WTC11 (cell line): ENCODE measurements at regions of chr3 and their contacts with region 1.

Region 1: DNA sequence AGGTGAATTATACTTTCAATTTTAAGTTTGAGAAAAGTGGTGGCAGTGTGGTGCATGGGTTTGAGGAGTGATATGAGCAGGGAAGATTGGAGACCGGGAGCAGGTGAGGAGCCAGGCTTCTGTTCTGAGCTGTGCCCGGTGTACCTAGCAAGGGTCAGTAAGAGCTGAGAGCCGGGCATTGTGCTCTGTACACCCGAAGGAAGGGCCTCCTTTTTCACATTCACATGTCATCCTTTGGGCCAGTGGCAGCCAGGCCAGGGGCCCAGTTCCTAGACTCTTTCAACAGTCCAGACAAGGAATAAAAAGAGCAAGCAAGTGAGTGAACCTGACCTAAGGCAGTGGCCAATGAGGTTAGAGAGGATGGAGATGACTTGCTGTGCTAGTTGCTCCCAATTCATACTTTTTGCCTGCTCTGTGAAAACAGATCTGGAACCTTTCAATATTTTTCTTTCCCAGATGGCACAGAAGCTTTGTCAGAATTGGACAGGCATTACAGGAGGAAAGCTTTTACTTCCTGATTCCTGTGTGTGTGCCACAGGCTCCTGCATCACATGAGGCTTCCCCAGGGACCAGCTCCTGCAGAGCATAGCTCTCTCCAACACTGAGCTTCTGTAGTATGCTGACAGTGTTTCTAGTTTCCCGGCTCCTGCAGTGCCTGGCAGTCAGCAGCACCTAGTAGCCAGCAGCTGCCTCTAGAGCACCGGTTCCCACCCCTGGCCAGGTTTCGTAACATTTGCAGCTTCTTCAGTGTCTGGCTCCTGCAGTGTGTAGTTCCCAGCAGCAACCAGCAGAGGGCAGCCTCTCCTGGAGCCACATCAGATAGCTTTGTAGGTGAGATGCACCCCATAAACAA is 5.3 kb upstream of the TRA2B start:
- DNase-seq: peak; percentile 90
- ATAC-seq: peak; percentile 99
- H3K4me3 Mint-ChIP-seq: no peak overlapping the region
- H3K27ac Mint-ChIP-seq: peak overlapping the region; percentile 16; the same call in 1 of the 2 replicates
- H3K4me1 Mint-ChIP-seq: peaks cover 7% of the 10 kb centered on the region
- H3K27me3 Mint-ChIP-seq: peaks cover 11% of the 10 kb centered on the region
- CTCF ChIP-seq: peak; percentile 98

Region 2: GRCh38 chr3:185585859-185586685 is 357.1 kb before region 1 on chr3 and contains the start of gene SENP2:
- CTCF ChIA-PET with region 1: interaction called, 10 read pairs
- POLR2A ChIA-PET with region 1: interaction called, 4 read pairs
- DNase-seq: peak; percentile 99
- ATAC-seq: peak; percentile 87
- H3K4me3 Mint-ChIP-seq: peak within 1 kb of the TSS; percentile 89
- H3K27ac Mint-ChIP-seq: peak within 1 kb of the TSS; percentile 99
- H3K4me1 Mint-ChIP-seq: peaks cover 37% of the 10 kb centered on the region
- H3K27me3 Mint-ChIP-seq: no peaks in the 10 kb centered on the region; the same call in 1 of the 2 replicates
- CTCF ChIP-seq: no peak
- total RNA-seq, gene SENP2: 55.0 to 57.2 TPM (median 56.9 TPM) in 3 replicates

Region 3: DNA sequence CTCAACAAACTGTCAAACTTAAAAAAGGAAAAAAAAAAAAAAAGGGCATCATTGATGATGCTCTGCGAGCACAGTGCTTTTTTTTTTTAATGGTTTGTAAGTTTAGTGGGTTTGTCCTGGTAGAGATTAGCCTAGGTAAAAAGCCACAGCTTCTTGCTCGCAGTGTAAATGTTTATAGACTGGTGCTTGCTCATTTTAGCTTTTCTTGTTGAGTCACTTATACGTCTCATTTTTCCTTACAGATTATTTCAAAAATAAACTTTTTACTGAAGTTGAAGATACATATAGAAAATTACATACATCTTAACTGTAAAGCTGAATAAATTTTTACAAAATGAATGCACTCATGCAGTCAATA is 11.2 kb after region 1 on chr3:
- CTCF ChIA-PET with region 1: interaction called, 113 read pairs
- POLR2A ChIA-PET with region 1: interaction called, 9 read pairs
- DNase-seq: no peak
- ATAC-seq: no peak
- H3K4me3 Mint-ChIP-seq: no peak overlapping the region
- H3K27ac Mint-ChIP-seq: no peak overlapping the region
- H3K4me1 Mint-ChIP-seq: peaks cover 13% of the 10 kb centered on the region
- H3K27me3 Mint-ChIP-seq: no peaks in the 10 kb centered on the region
- CTCF ChIP-seq: no peak

Region 4: DNA sequence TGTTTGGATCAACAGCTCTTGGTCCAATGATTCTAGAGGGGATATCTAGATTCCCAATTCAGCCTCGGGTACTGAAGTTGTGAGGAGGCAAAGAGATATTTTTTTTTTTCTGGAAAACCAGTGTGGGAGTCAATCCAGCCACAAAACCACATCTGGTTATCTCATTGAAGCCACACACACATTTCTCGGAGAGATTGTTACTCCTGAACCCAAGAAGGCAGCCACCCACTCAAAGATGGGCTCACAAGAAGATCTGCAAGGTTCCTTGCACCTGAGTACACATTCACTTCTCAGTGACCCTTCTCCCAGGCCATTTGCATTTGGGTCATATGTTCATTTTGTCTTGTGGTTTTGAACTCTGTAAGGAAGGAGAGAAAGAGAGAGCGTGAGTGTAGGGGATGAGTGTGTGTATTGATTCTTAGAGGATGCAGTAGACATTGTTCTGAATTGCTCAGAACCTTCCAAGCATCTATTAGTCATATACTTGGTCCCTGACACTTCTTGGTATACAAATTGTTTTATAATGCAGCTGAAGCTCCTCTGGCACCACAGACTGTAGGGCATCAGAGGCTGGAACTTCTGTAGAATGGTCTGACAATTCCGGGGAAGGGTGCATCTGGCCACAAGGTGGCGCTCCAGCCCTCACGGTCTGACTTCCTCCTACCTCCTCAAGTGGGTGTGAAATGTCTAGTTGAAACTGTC is 34.0 kb after region 1 on chr3:
- CTCF ChIA-PET with region 1: interaction called, 56 read pairs
- POLR2A ChIA-PET with region 1: no interaction called
- DNase-seq: peak; percentile 90
- ATAC-seq: peak; percentile 94
- H3K4me3 Mint-ChIP-seq: no peak overlapping the region
- H3K27ac Mint-ChIP-seq: no peak overlapping the region
- H3K4me1 Mint-ChIP-seq: no peaks in the 10 kb centered on the region
- H3K27me3 Mint-ChIP-seq: no peaks in the 10 kb centered on the region
- CTCF ChIP-seq: peak; percentile 92

Region 5: DNA sequence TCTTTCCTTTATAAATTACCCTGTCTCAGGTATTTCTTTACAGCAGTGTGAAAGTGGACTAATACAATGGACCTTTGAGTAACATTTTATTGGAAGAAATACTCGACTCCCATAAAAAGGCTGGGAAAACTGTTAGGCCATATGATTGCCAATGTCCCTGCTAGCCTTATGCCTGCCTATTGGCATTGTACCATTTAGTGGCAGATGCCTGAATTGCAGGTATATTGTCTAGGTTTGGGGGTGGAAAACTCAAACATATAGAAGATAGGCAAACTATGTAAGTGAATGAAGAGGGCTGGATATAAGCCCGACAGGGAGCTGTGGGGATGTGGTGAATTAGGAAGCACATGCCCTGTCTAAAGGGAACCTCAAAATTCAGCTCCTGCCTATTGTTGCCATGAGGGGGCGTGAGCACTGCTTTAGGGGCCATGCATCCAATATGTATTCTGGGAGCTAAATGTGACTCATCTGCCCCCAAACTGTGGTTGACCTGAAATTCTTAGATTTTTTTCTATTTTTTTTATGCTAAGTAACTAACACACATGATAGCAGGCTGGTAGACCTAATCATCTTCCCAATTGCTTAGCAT is 59.8 kb after region 1 on chr3:
- CTCF ChIA-PET with region 1: interaction called, 17 read pairs
- POLR2A ChIA-PET with region 1: no interaction called
- DNase-seq: peak; percentile 36
- ATAC-seq: peak; percentile 94
- H3K4me3 Mint-ChIP-seq: no peak overlapping the region
- H3K27ac Mint-ChIP-seq: no peak overlapping the region
- H3K4me1 Mint-ChIP-seq: no peaks in the 10 kb centered on the region
- H3K27me3 Mint-ChIP-seq: no peaks in the 10 kb centered on the region
- CTCF ChIP-seq: 0 out of 2 replicates have a peak, but pooled peaks have one; percentile 31

Region 6: GRCh38 chr3:186166036-186166435 is 222.9 kb after region 1 on chr3:
- CTCF ChIA-PET with region 1: no interaction called
- POLR2A ChIA-PET with region 1: no interaction called
- DNase-seq: no peak
- ATAC-seq: no peak
- H3K4me3 Mint-ChIP-seq: no peak overlapping the region
- H3K27ac Mint-ChIP-seq: no peak overlapping the region
- H3K4me1 Mint-ChIP-seq: no peaks in the 10 kb centered on the region
- H3K27me3 Mint-ChIP-seq: no peaks in the 10 kb centered on the region; the same call in 1 of the 2 replicates
- CTCF ChIP-seq: no peak

Region 7: GRCh38 chr3:186241910-186242821 is 299.0 kb after region 1 on chr3:
- CTCF ChIA-PET with region 1: interaction called, 16 read pairs
- POLR2A ChIA-PET with region 1: interaction called, 3 read pairs
- DNase-seq: peak; percentile 83
- ATAC-seq: peak; percentile 95
- H3K4me3 Mint-ChIP-seq: no peak overlapping the region
- H3K27ac Mint-ChIP-seq: no peak overlapping the region
- H3K4me1 Mint-ChIP-seq: peaks cover 25% of the 10 kb centered on the region
- H3K27me3 Mint-ChIP-seq: no peaks in the 10 kb centered on the region
- CTCF ChIP-seq: peak; percentile 25; the same call in 1 of the 2 replicates

Region 8: GRCh38 chr3:186540221-186540834 is 597.2 kb after region 1 on chr3:
- CTCF ChIA-PET with region 1: interaction called, 10 read pairs
- POLR2A ChIA-PET with region 1: no interaction called
- DNase-seq: peak; percentile 75
- ATAC-seq: peak; percentile 86
- H3K4me3 Mint-ChIP-seq: no peak overlapping the region
- H3K27ac Mint-ChIP-seq: peak overlapping the region; percentile 22
- H3K4me1 Mint-ChIP-seq: peaks cover 6% of the 10 kb centered on the region
- H3K27me3 Mint-ChIP-seq: no peaks in the 10 kb centered on the region
- CTCF ChIP-seq: peak; percentile 40; the same call in 1 of the 2 replicates